Activated naive CD4-positive, alpha-beta T cell treated with anti-CD3 and anti-CD28 coated beads for 36 hours (primary cell): ENCODE measurements at regions of chr1 and their contacts with region 1.

Region 1: GRCh38 chr1:113072757-113073478 is at the start of gene LRIG2:
- DNase-seq: peak; percentile 99
- H3K4me3 Mint-ChIP-seq: peak within 1 kb of the TSS; percentile 94
- H3K27ac Mint-ChIP-seq: peak within 1 kb of the TSS; percentile 91
- H3K4me1 Mint-ChIP-seq: peaks cover 27% of the 10 kb centered on the region
- H3K27me3 Mint-ChIP-seq: no peaks in the 10 kb centered on the region
- total RNA-seq, gene LRIG2: 7.7 to 9.1 TPM

Region 2: DNA sequence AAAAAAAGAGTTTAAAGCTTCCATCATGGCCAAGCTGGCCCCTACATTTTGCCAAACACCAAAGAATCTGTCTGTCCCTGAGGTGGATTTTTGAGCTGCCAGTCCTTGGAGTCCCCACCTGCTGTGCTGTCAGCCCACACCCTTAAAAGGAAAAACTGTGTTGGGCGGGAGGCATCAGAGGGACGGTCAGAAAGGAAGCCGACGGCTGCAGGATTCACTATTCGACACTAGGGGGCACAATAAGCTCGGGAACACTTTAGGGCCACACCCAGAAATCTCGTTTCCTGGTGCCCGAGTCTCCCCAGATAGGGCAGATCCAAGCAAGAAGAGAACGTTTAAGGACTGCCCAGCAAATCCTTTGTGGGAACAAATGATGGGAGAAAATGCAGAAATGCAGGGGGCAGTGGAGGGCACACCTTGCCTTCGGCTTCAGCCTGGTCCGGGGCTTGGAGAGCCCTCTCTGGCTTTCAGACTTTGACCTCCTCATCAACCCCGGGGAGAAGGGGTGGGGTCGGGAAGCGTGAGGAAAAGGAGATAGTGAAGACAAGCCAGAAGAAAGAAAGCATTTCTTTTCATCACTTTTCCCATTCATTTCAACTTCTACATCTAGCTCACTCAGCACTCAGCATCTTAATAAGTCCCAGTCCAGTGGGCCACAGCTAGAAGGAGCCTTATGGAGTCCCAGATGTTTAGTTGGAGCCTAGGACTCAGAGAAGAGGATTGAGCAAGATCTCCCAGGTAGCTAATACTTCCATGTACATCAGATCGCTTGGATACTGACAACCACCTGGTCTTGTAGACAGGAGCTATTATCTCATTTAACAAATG is 681.9 kb before region 1 on chr1:
- CTCF ChIA-PET with region 1: no interaction called
- intact Hi-C with region 1: loop called (anchors 2 kb)
- DNase-seq: peak; percentile 90
- H3K4me3 Mint-ChIP-seq: peak overlapping the region; percentile 45
- H3K27ac Mint-ChIP-seq: no peak overlapping the region
- H3K4me1 Mint-ChIP-seq: peaks cover 18% of the 10 kb centered on the region
- H3K27me3 Mint-ChIP-seq: peaks cover 14% of the 10 kb centered on the region

Region 3: DNA sequence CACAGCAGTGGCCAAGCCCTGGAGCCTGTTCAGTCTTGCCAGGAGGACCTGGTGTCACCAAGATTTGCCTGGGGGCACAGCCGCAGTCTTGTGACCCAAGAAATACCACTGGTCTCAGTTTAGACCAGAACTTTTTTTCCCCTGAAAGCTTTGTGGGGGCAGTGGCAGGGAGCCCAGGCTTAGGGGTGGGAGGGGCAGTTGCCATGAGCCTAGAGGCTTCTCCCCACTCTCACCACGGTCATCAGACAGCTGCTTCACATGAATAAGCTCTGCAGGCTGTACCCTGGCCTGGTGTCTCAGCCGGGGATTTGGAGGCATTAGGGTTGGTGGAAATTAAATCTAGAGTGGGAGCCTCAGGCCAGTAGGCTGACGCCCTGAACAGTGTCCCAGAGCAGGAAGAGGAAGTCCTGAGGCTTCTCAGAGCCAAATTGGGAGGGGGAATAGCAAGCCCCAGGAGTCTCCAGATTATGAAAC is 190.6 kb before region 1 on chr1:
- CTCF ChIA-PET with region 1: interaction called, 31 read pairs
- intact Hi-C with region 1: loop called (anchors 2 kb)
- DNase-seq: no peak
- H3K4me3 Mint-ChIP-seq: no peak overlapping the region
- H3K27ac Mint-ChIP-seq: no peak overlapping the region
- H3K4me1 Mint-ChIP-seq: no peaks in the 10 kb centered on the region
- H3K27me3 Mint-ChIP-seq: peaks cover 2% of the 10 kb centered on the region

Region 4: GRCh38 chr1:113086541-113086940 is 13.6 kb after region 1 on chr1:
- CTCF ChIA-PET with region 1: interaction called, 18 read pairs
- intact Hi-C with region 1: no loop called
- DNase-seq: no peak
- H3K4me3 Mint-ChIP-seq: no peak overlapping the region
- H3K27ac Mint-ChIP-seq: no peak overlapping the region
- H3K4me1 Mint-ChIP-seq: peaks cover 27% of the 10 kb centered on the region
- H3K27me3 Mint-ChIP-seq: no peaks in the 10 kb centered on the region

Region 5: GRCh38 chr1:113389953-113390834 is 317.3 kb after region 1 on chr1 and contains the start of gene MAGI3:
- CTCF ChIA-PET with region 1: interaction called, 5 read pairs
- intact Hi-C with region 1: loop called (anchors 2 kb)
- DNase-seq: peak; percentile 97
- H3K4me3 Mint-ChIP-seq: peak within 1 kb of the TSS; percentile 83
- H3K27ac Mint-ChIP-seq: peak within 1 kb of the TSS; percentile 48
- H3K4me1 Mint-ChIP-seq: peaks cover 20% of the 10 kb centered on the region
- H3K27me3 Mint-ChIP-seq: no peaks in the 10 kb centered on the region
- total RNA-seq, gene MAGI3: 5.9 to 6.4 TPM

Region 6: GRCh38 chr1:113811888-113812660 is 739.2 kb after region 1 on chr1 and contains the start of gene RSBN1:
- CTCF ChIA-PET with region 1: no interaction called
- intact Hi-C with region 1: loop called (anchors 2 kb)
- DNase-seq: peak; percentile 99
- H3K4me3 Mint-ChIP-seq: peak within 1 kb of the TSS; percentile 98
- H3K27ac Mint-ChIP-seq: peak within 1 kb of the TSS; percentile 94
- H3K4me1 Mint-ChIP-seq: peaks cover 31% of the 10 kb centered on the region
- H3K27me3 Mint-ChIP-seq: no peaks in the 10 kb centered on the region
- total RNA-seq, gene RSBN1: 13.6 to 14.3 TPM